HAP-1 (cell line): ENCODE measurements at regions of chr11 and their contacts with region 1.

Region 1: DNA sequence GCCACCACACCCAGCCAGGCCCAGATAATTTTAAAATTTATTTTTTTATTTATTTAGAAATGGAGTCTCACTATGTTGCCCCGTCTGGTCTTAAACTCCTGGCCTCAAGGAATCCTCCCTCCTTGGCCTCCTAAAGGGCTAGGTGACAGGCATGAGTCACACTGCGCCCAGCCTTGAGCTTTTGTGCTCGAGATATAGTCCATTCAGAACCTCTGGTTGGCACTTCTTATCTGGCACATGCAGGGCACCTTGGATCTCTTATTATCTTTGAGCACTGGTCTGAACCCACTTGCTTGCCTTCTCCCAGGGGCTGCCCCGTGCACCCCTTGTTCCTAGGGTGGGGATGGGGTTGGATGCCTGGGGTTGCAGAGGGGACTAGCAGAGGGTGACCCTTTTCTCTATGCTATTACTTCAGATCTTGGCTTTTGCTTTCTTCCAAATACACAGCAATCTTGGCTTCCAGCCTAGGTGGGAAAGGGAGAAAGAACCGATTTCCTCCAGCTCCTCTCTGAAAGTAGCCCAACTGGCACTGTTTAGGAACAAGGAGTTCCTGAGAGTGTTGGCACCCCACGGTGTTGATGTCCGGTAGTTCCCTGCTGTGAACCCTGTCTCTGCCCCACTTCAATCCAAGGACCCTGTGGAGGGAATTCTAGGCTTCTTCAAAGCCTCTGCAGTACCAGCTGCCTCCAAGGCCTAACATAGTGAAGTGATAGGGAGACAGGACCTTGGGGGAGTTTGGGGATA is 1.3 kb upstream of the SLC3A2 start:
- DNase-seq: no peak
- H3K4me3 ChIP-seq: peak overlapping the region; percentile 95; the same call in 1 of the 2 replicates
- H3K4me1 ChIP-seq: peaks cover 26% of the 10 kb centered on the region
- H3K27me3 ChIP-seq: no peaks in the 10 kb centered on the region

Region 2: GRCh38 chr11:61841636-61842527 is 1037.5 kb before region 1 on chr11:
- in situ Hi-C with region 1: no loop called
- DNase-seq: no peak
- H3K4me3 ChIP-seq: no peak overlapping the region
- H3K4me1 ChIP-seq: no peaks in the 10 kb centered on the region
- H3K27me3 ChIP-seq: no peaks in the 10 kb centered on the region

Region 3: DNA sequence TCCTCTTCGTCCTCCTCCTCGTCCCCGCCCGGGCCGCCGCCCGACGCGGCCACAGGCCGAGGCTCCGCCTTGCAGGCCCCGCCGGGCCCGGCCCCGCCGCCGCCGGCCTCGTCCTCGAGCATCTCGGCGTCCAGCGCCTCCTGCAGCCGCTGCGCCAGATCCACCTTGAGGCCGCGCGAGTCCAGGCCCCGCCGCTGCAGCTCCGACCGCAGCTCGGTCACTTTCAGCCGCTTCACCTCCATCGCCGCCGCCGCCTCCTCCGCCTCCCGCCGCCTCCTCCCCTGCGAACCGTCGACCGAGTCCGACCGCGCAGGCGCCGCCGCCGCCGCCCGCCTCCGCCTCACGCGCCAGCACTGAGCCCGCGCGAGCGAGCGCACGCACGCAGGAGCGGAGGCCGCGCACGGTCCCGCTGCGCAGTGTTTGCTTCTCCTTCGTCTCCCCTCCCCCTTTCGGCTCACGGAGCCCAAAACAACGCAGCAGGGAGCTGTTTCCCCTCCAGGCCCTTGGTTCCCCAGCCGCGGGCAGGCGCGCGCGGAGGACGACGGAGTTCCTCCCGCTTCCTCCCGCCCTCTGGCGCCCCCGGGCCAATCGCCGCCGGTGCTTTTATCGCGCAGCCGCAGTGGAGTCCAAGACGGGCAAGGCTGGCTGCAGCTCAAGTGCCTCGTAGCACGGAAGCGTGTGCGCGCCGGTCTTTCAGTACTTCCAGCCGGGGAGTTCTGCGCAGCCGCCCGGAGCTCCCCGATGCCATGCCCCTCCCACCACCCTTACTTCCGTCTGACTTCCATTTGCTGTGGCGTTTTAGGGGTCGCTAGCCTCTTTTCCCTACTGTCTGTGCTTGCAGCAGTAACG is 152.3 kb before region 1 on chr11 and contains the start of gene HNRNPUL2:
- in situ Hi-C with region 1: loop called (anchors 10 kb)
- DNase-seq: peak; percentile 96 to 98
- H3K4me3 ChIP-seq: peak within 1 kb of the TSS; percentile 57
- H3K4me1 ChIP-seq: peaks cover 9% of the 10 kb centered on the region
- H3K27me3 ChIP-seq: no peaks in the 10 kb centered on the region

Region 4: DNA sequence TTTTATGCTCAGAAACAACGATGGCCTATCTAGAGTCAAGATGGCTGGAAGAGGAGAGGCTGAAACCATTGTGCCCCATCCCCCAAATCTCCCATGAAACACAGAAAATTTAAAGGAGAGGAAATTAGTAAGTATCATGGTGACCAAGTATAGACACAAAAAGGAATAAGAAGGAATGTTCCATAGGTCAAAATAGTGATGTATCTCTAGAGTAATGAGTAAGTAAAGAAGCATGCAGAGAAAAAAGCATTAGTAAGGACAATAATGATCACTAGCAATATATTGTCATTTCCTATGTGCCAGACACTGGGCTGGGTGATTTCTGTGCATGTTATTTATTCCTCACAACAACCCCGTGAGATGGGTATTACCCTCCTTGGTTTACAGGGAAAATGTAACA is 267.2 kb after region 1 on chr11:
- in situ Hi-C with region 1: no loop called
- DNase-seq: no peak
- H3K4me3 ChIP-seq: no peak overlapping the region
- H3K4me1 ChIP-seq: no peaks in the 10 kb centered on the region
- H3K27me3 ChIP-seq: peaks cover 4% of the 10 kb centered on the region; the same call in 1 of the 2 replicates